ENCODE measurements at regions of chr11 and their contacts with region 1.

Region 1: GRCh38 chr11:75142714-75143419 is 8.0 kb upstream of the SLCO2B1 start:
- DNase-seq: peak; percentile 94
- ATAC-seq: peak; percentile 98
- H3K4me3 ChIP-seq: 0 out of 2 replicates have a peak overlapping the region, but pooled peaks have one; percentile 26
- H3K27ac ChIP-seq: 0 out of 2 replicates have a peak overlapping the region, but pooled peaks have one; percentile 10
- H3K4me1 ChIP-seq: peaks cover 11% of the 10 kb centered on the region
- H3K27me3 ChIP-seq: peaks cover 32% of the 10 kb centered on the region
- CTCF ChIP-seq: no peak

Region 2: DNA sequence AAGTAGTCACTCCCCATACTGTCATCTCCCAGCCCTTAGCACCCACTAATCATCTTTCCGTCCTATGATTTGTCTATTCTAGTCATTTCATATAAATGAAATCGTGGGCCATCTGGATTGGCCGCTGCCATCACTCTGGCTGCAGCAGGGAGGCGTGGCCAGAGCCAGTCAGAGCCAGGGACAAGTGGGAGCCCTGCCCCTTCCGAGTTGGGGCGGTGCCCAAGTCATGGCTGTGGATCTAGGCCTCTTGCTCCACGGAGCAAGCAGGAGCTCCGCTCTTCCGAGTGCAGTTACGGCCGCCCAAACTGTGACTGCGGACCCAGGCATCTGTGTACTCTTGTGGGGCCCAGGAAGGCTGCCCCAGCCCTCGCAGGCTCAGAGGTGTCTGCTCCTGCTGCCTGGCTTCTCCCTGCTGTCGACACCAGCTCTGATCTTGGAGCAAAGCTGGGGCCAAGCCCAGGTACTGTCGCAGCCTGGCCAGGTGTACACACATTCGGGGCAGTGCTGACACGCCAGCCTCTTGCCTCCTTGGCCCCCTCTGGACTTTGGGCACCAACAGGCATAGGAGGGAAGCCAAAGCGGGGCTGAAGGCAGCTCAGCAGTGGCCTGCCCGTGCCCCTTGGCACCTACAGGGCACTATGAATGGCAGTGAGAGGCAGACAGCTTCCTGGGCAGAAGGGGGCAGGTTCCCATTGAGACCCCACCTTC is 1346.8 kb before region 1 on chr11:
- CTCF ChIA-PET with region 1: interaction called, 12 read pairs
- POLR2A ChIA-PET with region 1: no interaction called
- intact Hi-C with region 1: no loop called
- DNase-seq: no peak
- ATAC-seq: no peak
- H3K4me3 ChIP-seq: no peak overlapping the region
- H3K27ac ChIP-seq: no peak overlapping the region
- H3K4me1 ChIP-seq: no peaks in the 10 kb centered on the region
- H3K27me3 ChIP-seq: no peaks in the 10 kb centered on the region
- CTCF ChIP-seq: no peak

Region 3: DNA sequence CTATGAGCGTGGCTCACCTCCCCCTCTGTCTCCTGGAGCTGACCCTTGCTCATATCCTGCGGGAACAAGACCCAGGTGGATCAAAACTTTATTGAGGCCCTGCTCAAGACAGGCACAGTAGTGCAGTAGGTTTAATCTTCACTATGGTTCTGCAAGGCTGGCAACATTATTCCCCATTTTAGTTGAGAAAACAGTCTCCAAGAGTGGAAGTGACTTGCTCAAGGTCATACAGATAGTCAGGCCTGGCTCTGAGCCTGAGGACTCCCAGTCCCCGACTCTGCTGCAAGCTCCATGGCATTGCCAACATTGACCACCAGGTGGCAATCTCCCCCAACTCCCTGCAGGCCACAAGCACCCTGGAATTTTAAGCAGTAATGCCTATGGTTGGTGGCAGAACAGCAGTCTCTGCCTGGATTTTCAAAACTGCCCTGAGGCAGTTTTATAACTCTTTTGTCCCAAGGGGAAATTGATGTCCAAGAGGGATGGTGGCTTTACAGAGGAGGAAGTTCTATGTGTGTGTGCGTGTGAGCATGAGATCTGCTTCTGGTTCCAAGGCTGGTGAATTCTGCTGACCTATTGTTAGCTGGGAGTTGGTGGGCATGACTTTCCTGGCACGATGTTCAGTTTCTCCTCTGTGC is 120.0 kb before region 1 on chr11:
- CTCF ChIA-PET with region 1: interaction called, 6 read pairs
- POLR2A ChIA-PET with region 1: no interaction called
- intact Hi-C with region 1: loop called (anchors 1 kb)
- DNase-seq: peak; percentile 93
- ATAC-seq: peak; percentile 98
- H3K4me3 ChIP-seq: no peak overlapping the region
- H3K27ac ChIP-seq: no peak overlapping the region
- H3K4me1 ChIP-seq: no peaks in the 10 kb centered on the region
- H3K27me3 ChIP-seq: no peaks in the 10 kb centered on the region
- CTCF ChIP-seq: peak; percentile 99

Region 4: GRCh38 chr11:75241036-75241905 is 98.4 kb after region 1 on chr11:
- CTCF ChIA-PET with region 1: interaction called, 15 read pairs
- POLR2A ChIA-PET with region 1: no interaction called
- intact Hi-C with region 1: no loop called
- DNase-seq: peak; percentile 94
- ATAC-seq: peak; percentile 95
- H3K4me3 ChIP-seq: peak overlapping the region; percentile 65
- H3K27ac ChIP-seq: no peak overlapping the region
- H3K4me1 ChIP-seq: peaks cover 4% of the 10 kb centered on the region; the same call in 1 of the 2 replicates
- H3K27me3 ChIP-seq: peaks cover 53% of the 10 kb centered on the region
- CTCF ChIP-seq: peak; percentile 70

Region 5: GRCh38 chr11:77127232-77127911 is 1984.5 kb after region 1 on chr11:
- CTCF ChIA-PET with region 1: interaction called, 10 read pairs
- POLR2A ChIA-PET with region 1: no interaction called
- intact Hi-C with region 1: no loop called
- DNase-seq: peak; percentile 50
- ATAC-seq: peak; percentile 77
- H3K4me3 ChIP-seq: peak overlapping the region; percentile 68
- H3K27ac ChIP-seq: no peak overlapping the region
- H3K4me1 ChIP-seq: peaks cover 6% of the 10 kb centered on the region; the same call in 1 of the 2 replicates
- H3K27me3 ChIP-seq: no peaks in the 10 kb centered on the region
- CTCF ChIP-seq: peak; percentile 99